PC-3 (cell line): ENCODE measurements at regions of chr7 and their contacts with region 1.

Region 1: DNA sequence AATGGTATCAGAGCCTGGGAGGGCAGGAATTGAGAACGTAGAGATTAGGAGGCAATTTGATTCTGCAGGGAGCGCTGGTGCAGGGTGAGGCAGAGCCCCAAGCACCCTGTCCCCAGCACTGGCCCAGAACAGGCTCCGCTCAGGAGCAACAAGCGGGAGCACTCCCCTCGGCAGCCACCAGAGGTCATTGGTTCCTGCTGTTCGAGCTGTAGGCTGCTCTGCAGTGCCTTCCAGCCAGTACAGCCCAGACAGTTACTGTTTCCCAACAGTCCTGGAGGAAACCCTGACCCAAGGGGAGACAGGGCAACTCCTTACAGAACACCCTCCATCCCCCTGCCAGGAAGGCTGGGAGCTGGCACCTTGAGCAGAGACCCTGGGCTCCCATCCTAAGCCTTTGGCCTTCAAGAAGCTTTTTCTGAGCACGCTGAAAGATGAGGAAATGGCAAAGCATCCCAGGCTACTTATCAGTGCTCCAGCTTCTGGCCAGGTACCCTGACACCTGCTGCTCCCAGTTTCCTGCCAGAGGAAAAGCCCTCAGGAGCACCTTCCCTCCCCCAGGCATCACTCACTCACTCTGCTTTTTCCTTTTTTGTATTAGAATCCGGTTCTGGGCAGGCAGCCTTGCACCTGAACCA is 71.2 kb upstream of the EFCAB10 start:
- DNase-seq: peak; percentile 92
- ATAC-seq: peak; percentile 53
- H3K4me3 ChIP-seq: no peak overlapping the region
- H3K27ac ChIP-seq: no peak overlapping the region
- H3K4me1 ChIP-seq: peaks cover 47% of the 10 kb centered on the region
- H3K27me3 ChIP-seq: no peaks in the 10 kb centered on the region
- CTCF ChIP-seq: peak; percentile 96

Region 2: DNA sequence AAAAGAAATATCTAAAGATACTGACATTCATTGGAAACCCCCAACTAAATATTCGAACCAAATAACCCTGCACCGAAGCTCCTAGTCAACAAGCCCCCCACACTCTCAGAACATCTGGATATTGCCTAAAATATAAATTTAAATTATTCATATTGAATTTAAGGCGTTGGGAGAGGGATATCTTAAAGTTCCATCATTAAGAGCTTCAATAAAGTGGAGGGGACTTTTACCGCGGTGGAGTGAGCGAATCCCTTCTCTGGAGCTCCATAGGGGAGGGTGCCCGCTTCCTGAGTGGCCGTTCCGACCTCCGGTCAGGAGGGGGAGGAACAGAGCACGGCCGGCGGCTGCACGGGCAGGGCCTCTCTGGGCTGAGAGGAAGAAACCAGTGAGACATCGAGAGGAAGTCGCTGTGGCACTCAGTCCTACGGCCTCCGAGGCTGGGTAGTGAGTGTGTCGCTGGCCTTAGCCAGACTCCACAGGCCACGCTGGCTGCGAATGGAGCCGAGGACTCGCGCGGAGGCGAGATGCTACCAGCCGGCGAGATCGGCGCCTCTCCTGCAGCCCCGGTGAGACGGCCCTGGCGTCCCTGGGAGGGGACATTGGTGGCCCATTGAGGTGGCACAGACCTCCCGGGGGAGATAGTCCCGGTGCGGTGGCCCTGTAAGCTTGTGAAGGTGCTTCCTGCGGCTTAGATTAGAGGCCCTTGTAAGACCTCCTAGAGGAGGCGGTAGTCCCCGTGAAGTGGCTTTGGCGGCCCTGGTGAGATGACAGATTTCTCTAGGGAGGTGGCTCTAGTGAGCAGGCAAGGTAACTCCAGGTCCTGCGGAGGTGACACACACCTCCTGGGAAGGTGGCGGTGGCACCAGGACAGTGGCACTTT is 120.4 kb before region 1 on chr7 and contains the start of gene RINT1:
- CTCF ChIA-PET with region 1: no interaction called
- POLR2A ChIA-PET with region 1: no interaction called
- intact Hi-C with region 1: loop called (anchors 5 kb)
- DNase-seq: peak; percentile 96
- ATAC-seq: peak; percentile 98
- H3K4me3 ChIP-seq: peak within 1 kb of the TSS; percentile 91
- H3K27ac ChIP-seq: peak within 1 kb of the TSS; percentile 12; the same call in 1 of the 2 replicates
- H3K4me1 ChIP-seq: peaks cover 18% of the 10 kb centered on the region
- H3K27me3 ChIP-seq: no peaks in the 10 kb centered on the region
- CTCF ChIP-seq: peak; percentile 88
- total RNA-seq, gene RINT1: 20.8 TPM in 2 replicates

Region 3: DNA sequence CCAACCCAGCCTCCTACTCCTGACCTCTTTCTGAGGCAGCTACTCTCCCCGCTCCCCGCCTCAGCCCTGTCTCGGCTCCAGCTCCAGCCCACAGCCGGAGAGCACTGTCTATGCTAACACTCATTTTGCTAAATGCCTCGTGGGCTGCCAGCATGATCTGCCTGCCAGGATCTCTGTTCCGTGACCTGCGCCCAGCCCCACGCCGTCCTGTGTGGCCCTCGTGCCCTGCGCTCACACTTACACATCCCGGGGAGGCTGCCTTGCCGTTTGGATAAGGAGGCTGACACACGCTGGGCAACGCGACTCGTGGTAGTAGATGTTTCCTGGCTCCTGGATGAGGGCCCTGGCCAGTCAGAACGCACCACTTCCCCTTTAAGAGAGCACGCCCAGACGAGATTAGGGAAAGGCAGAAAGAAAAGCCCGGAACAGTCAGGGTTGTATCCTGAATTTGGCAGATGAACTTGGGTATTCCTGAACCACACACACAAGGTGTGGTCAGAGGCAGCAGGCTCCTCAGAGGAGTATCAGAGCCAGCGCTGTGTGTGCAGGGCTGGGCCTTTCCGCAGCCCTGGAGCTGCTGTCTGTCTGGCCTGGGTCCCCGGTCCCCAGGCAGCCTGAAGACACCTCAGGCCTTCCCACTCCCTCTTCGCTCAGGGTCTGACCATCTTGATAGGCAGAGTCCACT is 26.5 kb after region 1 on chr7:
- CTCF ChIA-PET with region 1: no interaction called
- POLR2A ChIA-PET with region 1: no interaction called
- intact Hi-C with region 1: no loop called
- DNase-seq: peak; percentile 72
- ATAC-seq: peak; percentile 91
- H3K4me3 ChIP-seq: peak overlapping the region; percentile 59
- H3K27ac ChIP-seq: no peak overlapping the region
- H3K4me1 ChIP-seq: peaks cover 19% of the 10 kb centered on the region
- H3K27me3 ChIP-seq: no peaks in the 10 kb centered on the region
- CTCF ChIP-seq: no peak

Region 4: DNA sequence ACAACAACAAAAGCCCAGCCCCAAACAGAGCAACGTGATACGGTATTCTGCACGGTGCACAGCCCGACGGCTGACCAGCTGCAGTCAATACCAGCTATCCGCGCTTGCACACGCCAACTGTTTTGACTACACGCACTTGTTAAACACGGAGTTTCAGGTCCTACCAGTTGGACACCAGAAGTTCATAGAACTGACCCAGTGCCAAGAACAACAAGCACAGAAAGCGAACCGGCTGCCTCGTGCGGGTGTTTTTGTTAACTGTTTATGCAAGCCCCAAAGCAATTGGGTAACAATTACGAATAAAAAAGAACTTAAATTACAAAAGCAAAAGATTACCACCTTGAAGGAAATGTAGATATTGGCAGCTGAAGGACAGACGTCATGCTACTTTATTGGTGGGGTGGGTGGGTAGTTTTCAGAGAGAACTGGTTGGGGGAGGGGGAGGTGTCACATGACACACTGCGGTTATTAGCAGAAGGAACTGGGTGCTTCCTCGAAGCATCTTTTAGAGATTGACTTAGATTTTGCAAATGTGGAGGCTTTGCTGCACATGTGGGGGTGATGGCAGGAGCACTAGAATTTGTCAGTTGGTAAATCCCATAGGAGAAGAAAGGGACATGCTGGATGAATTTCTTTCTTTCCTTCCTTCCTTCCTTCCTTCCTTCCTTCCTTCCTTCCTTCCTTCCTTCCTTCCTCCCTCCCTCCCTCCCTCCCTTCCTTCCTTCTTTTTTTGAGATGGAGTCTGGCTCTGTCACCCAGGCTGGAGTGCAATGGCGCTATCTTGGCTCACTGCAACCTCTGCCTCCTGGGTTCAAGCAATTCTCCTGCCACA is 39.5 kb after region 1 on chr7:
- CTCF ChIA-PET with region 1: no interaction called
- POLR2A ChIA-PET with region 1: no interaction called
- intact Hi-C with region 1: loop called (anchors 1 kb)
- DNase-seq: peak; percentile 93
- ATAC-seq: peak; percentile 83
- H3K4me3 ChIP-seq: peak overlapping the region; percentile 67
- H3K27ac ChIP-seq: no peak overlapping the region
- H3K4me1 ChIP-seq: peaks cover 11% of the 10 kb centered on the region
- H3K27me3 ChIP-seq: no peaks in the 10 kb centered on the region
- CTCF ChIP-seq: no peak

Region 5: GRCh38 chr7:105830391-105831301 is 178.2 kb after region 1 on chr7:
- CTCF ChIA-PET with region 1: interaction called, 3 read pairs
- POLR2A ChIA-PET with region 1: no interaction called
- intact Hi-C with region 1: loop called (anchors 1 kb)
- DNase-seq: peak; percentile 99
- ATAC-seq: peak; percentile 82
- H3K4me3 ChIP-seq: no peak overlapping the region
- H3K27ac ChIP-seq: peak overlapping the region; percentile 82
- H3K4me1 ChIP-seq: peaks cover 57% of the 10 kb centered on the region
- H3K27me3 ChIP-seq: no peaks in the 10 kb centered on the region
- CTCF ChIP-seq: no peak

Region 6: DNA sequence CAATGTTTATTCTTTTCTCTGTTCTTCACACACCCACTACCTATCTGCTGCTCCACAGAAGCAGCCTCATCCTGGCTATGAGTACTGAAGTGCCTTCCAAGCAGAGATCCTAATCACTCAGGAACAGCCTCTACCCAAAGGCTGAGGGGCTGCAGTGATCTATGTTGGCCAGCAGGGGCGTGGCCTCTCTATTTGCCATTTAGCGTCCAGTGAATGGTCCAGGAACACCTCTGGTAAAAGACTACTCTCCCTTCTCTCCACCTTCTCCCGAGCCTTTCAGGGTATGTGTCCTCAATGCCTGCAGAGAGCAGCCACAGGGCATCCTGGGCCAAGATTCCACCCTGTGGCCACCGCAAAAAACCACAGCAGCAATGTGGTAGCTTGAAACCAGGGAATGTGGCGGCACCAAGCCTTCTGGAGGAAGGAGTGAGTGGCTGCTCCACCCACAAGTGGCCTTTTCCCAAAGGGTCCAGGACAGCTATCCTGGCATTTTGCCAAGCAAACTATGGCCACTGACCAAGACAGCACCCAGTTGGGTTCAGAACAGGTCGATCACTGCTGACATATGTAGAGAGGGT is 388.8 kb after region 1 on chr7:
- CTCF ChIA-PET with region 1: no interaction called
- POLR2A ChIA-PET with region 1: no interaction called
- intact Hi-C with region 1: loop called (anchors 1 kb)
- DNase-seq: peak; percentile 79
- ATAC-seq: peak; percentile 66
- H3K4me3 ChIP-seq: no peak overlapping the region
- H3K27ac ChIP-seq: no peak overlapping the region
- H3K4me1 ChIP-seq: peaks cover 5% of the 10 kb centered on the region
- H3K27me3 ChIP-seq: no peaks in the 10 kb centered on the region
- CTCF ChIP-seq: peak; percentile 97